ENCODE measurements at regions of chrX and their contacts with region 1.

Region 1: GRCh38 chrX:120603707-120604360 is at the start of gene MCTS1:
- DNase-seq: peak; percentile 96
- ATAC-seq: peak; percentile 98
- H3K4me3 ChIP-seq: peak within 1 kb of the TSS; percentile 90
- H3K27ac ChIP-seq: peak within 1 kb of the TSS; percentile 92
- H3K4me1 ChIP-seq: peaks cover 10% of the 10 kb centered on the region
- H3K27me3 ChIP-seq: no peaks in the 10 kb centered on the region
- CTCF ChIP-seq: no peak
- total RNA-seq, gene MCTS1: 50.0 and 83.7 TPM in 2 replicates

Region 2: GRCh38 chrX:120514236-120514635 is 89.6 kb before region 1 on chrX:
- CTCF ChIA-PET with region 1: no interaction called
- POLR2A ChIA-PET with region 1: no interaction called
- intact Hi-C with region 1: loop called (anchors 5 kb)
- DNase-seq: peak; percentile 64
- ATAC-seq: peak; percentile 84
- H3K4me3 ChIP-seq: no peak overlapping the region
- H3K27ac ChIP-seq: no peak overlapping the region
- H3K4me1 ChIP-seq: peaks cover 17% of the 10 kb centered on the region
- H3K27me3 ChIP-seq: no peaks in the 10 kb centered on the region
- CTCF ChIP-seq: peak; percentile 76

Region 3: DNA sequence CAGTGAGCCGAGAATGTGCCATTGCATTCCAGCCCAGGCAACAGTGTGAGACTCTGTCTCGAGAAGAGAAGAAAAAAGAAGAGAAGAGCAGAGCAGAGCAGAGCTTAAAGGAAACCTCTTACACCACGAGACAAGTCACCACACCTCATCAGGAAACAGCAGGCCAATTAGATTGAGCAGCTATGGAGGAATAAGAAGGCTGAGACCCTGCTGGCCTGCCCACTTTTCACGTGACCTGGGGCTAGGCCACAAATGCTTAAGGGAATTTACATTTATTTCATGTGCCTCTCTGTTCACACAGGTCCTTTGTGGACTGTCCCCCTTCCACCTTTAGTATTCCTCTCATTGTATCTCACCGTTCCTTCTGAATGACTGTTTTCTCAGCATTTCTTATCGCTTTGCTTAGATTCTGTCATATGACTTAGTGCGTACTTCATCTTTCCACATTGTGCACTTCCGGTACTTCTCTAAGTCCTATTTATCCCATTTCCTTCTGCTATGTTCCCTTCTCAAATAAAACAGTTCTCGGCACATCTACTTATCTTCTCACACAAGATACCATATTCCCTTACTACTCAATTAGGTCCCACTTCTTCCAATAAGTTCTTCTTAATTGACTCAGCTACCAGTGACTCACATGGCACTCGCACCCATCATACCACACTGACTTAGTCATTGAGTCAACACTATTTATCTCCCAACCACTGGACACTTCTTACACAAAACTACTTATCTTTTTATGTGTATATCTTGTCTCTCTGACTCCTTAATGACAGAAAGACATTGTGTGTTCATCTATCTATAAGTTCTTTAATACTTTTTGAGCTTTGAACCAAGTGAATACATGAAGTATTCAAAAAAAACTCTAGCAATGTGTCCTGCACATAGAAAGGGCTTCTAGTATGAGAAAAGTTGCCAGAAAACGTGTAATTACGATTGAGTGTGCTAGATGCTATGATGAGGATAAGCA is 54.1 kb before region 1 on chrX:
- CTCF ChIA-PET with region 1: no interaction called
- POLR2A ChIA-PET with region 1: no interaction called
- intact Hi-C with region 1: loop called (anchors 2 kb)
- DNase-seq: peak; percentile 88
- ATAC-seq: peak; percentile 94
- H3K4me3 ChIP-seq: peak overlapping the region; percentile 31; the same call in 1 of the 2 replicates
- H3K27ac ChIP-seq: peak overlapping the region; percentile 86
- H3K4me1 ChIP-seq: peaks cover 26% of the 10 kb centered on the region
- H3K27me3 ChIP-seq: no peaks in the 10 kb centered on the region
- CTCF ChIP-seq: no peak

Region 4: DNA sequence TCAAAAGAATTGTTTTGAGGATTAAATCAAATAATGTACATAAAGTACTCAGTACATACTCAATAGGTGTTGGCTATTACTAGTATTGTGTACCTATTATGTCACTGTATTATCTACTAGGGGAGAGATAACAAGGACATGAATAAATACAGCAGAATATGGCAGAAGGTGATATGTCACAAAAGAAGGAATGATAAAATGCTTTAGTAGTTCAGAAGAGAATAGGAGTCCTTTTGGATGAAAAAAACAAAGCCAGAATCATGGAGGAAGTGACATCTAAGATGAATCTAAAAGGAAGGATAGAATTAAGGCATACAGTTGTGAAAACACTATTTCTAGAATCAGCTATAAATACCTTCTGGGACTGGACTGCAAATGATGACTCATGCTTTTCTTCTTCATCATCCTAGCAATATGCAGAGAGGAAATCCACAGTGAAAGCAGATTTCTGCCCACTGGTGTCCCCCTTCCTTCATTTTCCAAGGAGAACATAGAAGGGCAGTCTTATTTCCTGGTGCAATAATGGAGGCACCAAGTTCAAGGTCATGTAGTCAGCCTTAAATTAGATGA is 542.3 kb after region 1 on chrX:
- CTCF ChIA-PET with region 1: no interaction called
- POLR2A ChIA-PET with region 1: no interaction called
- intact Hi-C with region 1: no loop called
- DNase-seq: peak; percentile 23
- ATAC-seq: 0 out of 2 replicates have a peak, but pooled peaks have one; percentile 20
- H3K4me3 ChIP-seq: no peak overlapping the region
- H3K27ac ChIP-seq: no peak overlapping the region
- H3K4me1 ChIP-seq: no peaks in the 10 kb centered on the region
- H3K27me3 ChIP-seq: no peaks in the 10 kb centered on the region
- CTCF ChIP-seq: no peak

Region 5: DNA sequence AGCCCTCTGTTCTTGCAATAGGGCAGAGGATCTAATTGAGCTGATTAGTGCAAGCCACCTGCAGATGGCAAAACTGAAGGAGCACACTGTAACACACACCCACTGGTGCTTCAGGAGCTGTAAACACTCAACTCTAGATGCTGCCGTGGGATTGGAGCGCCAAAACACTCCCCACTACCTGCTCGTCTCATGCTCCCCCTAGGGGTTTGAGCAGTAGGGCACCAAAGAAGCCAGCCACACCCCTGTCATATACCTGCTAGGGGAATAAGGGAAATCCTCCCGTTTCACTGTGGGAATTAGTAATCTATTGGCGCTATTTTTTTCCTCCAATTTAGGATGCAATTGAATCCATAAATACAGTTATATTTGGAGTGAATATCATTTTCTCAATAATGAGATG is 803.8 kb after region 1 on chrX:
- CTCF ChIA-PET with region 1: no interaction called
- POLR2A ChIA-PET with region 1: no interaction called
- intact Hi-C with region 1: no loop called
- DNase-seq: no peak
- ATAC-seq: no peak
- H3K4me3 ChIP-seq: no peak overlapping the region
- H3K27ac ChIP-seq: no peak overlapping the region
- H3K4me1 ChIP-seq: no peaks in the 10 kb centered on the region
- H3K27me3 ChIP-seq: no peaks in the 10 kb centered on the region
- CTCF ChIP-seq: peak; percentile 32; the same call in 1 of the 2 replicates

Measured in PC-3 (cell line).